SK-N-SH (cell line): ENCODE measurements at regions of chr4 and their contacts with region 1.

Region 1: DNA sequence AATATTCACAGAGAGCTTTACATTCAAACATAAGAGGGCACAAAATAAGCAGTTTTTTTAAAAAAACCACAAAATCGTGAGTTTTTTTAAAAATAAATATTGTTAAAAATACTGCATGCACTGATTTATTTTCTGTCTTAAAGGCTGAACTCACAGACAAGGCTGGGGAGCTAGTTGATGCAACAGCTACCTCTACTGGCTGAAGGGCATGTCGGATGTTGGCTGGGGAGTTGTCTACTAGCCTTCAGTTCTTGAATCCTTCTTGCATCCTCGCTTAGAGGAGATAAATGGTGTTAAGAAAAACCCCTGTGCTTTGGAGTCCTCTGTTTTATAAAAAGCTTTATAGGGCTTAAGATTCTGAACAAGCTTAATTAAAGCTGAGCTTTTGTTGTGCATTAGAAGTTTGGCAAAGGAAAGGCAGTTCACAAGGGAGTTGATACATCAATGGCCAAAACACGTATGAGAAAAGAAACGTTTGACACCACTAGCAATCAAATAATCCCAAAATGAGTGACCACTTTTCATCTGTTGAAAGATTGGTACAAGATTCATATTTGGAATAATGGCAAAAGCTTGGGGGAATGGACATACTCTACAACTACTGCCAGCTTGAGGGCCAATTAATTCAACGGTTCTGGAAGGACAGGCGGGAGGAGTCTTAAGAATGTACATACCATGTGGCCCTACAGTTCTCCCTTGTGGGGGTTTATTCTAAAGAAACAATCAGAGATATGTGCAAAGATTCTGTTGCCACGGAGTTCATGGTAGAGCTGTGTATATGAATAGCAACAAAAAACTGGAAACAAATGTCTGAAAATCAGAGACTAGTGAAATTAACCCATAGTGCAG is 94.7 kb downstream of the SEL1L3 start:
- DNase-seq: peak; percentile 73
- H3K4me3 ChIP-seq: no peak overlapping the region
- H3K27ac ChIP-seq: no peak overlapping the region
- H3K4me1 ChIP-seq: no peaks in the 10 kb centered on the region
- H3K27me3 ChIP-seq: no peaks in the 10 kb centered on the region
- CTCF ChIP-seq: peak; percentile 96
- EP300 ChIP-seq: no peak
- RAD21 ChIP-seq: peak; percentile 95

Region 2: DNA sequence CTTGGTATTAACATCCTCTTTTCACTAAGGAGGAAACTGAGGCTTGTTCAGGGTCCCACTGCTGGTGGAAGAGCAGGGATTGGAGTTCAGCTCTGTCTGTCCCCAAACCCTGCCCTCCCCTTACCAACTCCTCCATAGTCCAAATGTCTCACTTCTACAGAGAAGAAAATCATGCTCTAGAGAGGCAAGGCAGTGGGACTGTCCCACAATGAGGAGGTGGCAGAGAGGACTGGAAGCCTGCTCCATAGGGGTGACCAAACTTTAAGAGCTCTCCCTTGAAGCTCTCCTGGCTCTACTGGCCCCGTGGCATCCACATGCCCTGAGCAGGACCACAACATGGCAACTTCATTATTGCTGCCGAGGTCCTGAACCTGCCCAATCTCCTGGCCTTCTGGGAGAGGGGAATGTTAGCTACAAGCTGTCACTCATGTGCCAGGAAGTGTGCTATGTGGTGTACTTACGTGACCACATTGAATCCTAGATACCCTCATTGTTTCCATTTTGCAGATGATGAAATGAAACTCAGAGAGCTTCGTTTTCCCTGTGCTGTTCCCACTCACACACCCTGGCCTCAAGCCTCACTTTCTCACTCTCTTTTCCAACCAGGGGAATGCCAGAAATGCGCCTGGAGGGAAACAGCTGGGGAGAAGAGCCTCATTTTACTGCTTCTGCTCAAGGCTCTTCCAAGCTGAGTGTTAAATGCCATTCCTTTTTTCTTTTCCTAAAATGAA is 319.6 kb before region 1 on chr4:
- CTCF ChIA-PET with region 1: interaction called, 166 read pairs
- POLR2A ChIA-PET with region 1: no interaction called
- DNase-seq: no peak
- H3K4me3 ChIP-seq: no peak overlapping the region
- H3K27ac ChIP-seq: no peak overlapping the region
- H3K4me1 ChIP-seq: no peaks in the 10 kb centered on the region
- H3K27me3 ChIP-seq: no peaks in the 10 kb centered on the region
- CTCF ChIP-seq: no peak
- EP300 ChIP-seq: no peak
- RAD21 ChIP-seq: no peak

Region 3: DNA sequence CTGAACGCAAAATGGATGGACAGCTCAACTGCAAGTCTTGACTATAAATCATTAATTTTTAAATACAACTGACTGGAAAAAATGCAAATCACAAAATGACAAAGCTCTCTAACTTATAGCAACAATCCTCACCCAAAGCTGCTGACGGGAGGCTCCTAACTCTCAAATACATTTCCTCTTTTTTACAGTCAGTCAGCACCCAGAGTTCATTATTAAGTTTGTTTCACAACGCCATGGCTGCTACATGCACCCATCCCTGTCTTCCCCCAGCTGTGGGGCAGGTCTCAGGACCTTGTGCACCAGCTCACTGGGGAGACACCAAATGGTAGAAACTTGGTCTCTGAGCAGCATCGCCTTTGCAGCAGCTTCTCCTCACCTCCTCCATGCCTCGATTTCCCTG is 14.9 kb before region 1 on chr4:
- CTCF ChIA-PET with region 1: interaction called, 22 read pairs
- POLR2A ChIA-PET with region 1: no interaction called
- DNase-seq: no peak
- H3K4me3 ChIP-seq: no peak overlapping the region
- H3K27ac ChIP-seq: no peak overlapping the region
- H3K4me1 ChIP-seq: no peaks in the 10 kb centered on the region
- H3K27me3 ChIP-seq: no peaks in the 10 kb centered on the region
- CTCF ChIP-seq: no peak
- EP300 ChIP-seq: no peak
- RAD21 ChIP-seq: no peak

Region 4: DNA sequence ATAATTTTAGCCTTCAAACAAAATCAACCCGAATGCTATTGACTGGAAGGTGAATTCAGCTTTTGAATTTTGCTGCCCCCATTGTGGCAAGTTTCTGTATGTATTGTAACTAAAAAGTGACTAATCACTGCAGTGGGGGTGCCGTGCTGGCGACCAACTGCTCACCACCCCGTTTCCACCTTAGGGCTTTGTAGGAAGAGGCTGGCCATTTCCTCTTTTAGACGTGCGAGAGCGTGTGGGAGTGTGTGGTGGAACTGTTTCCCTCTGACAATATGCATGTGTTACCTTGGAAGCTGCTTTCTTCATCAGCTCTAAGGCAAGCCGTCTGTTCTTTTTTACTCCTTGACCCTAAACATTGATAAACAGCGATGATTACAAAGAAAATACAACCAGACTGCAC is 15.8 kb after region 1 on chr4:
- CTCF ChIA-PET with region 1: interaction called, 10 read pairs
- POLR2A ChIA-PET with region 1: no interaction called
- DNase-seq: no peak
- H3K4me3 ChIP-seq: no peak overlapping the region
- H3K27ac ChIP-seq: no peak overlapping the region
- H3K4me1 ChIP-seq: no peaks in the 10 kb centered on the region
- H3K27me3 ChIP-seq: no peaks in the 10 kb centered on the region
- CTCF ChIP-seq: no peak
- EP300 ChIP-seq: no peak
- RAD21 ChIP-seq: no peak